CD4-positive, alpha-beta memory T cell (primary cell): ENCODE measurements at regions of chr1 and their contacts with region 1.

Region 1: GRCh38 chr1:119675349-119676345 is 27.6 kb upstream of the ZNF697 start:
- DNase-seq: peak; percentile 31 to 42 (median 36)
- H3K4me3 ChIP-seq: peak overlapping the region in 1 of 2 donors; percentile 12
- H3K4me3 Mint-ChIP-seq: peak overlapping the region in 7 of 8 donors; percentile 13 to 77 (median 61)
- H3K27ac ChIP-seq: no peak overlapping the region
- H3K27ac Mint-ChIP-seq: no peak overlapping the region
- H3K4me1 ChIP-seq: peaks cover 8% of the 10 kb centered on the region
- H3K4me1 Mint-ChIP-seq: peaks cover 0 to 6% (median 5%) of the 10 kb centered on the region in 4 donors
- H3K27me3 ChIP-seq: peaks cover 5% of the 10 kb centered on the region
- H3K27me3 Mint-ChIP-seq: peaks cover 11 to 14% of the 10 kb centered on the region in 2 donors

Region 2: GRCh38 chr1:119275145-119276134 is 400.2 kb before region 1 on chr1:
- CTCF ChIA-PET with region 1: interaction called, 16 read pairs
- POLR2A ChIA-PET with region 1: no interaction called
- intact Hi-C with region 1: loop called (anchors 1 kb)
- DNase-seq: peak in 4 of 5 donors; percentile 19 to 28 (median 26)
- H3K4me3 ChIP-seq: no peak overlapping the region
- H3K4me3 Mint-ChIP-seq: no peak overlapping the region
- H3K27ac ChIP-seq: no peak overlapping the region
- H3K27ac Mint-ChIP-seq: peak overlapping the region in 1 of 7 donors; percentile 54
- H3K4me1 ChIP-seq: no peaks in the 10 kb centered on the region
- H3K4me1 Mint-ChIP-seq: no peaks in the 10 kb centered on the region
- H3K27me3 ChIP-seq: no peaks in the 10 kb centered on the region
- H3K27me3 Mint-ChIP-seq: peaks cover 4 to 5% of the 10 kb centered on the region in 2 donors

Region 3: GRCh38 chr1:119613769-119614720 is 61.6 kb before region 1 on chr1:
- CTCF ChIA-PET with region 1: interaction called, 4 read pairs
- POLR2A ChIA-PET with region 1: no interaction called
- intact Hi-C with region 1: loop called (anchors 2 kb)
- DNase-seq: peak in 4 of 5 donors; percentile 16 to 22 (median 20)
- H3K4me3 ChIP-seq: no peak overlapping the region
- H3K4me3 Mint-ChIP-seq: no peak overlapping the region
- H3K27ac ChIP-seq: no peak overlapping the region
- H3K27ac Mint-ChIP-seq: no peak overlapping the region
- H3K4me1 ChIP-seq: no peaks in the 10 kb centered on the region
- H3K4me1 Mint-ChIP-seq: no peaks in the 10 kb centered on the region
- H3K27me3 ChIP-seq: no peaks in the 10 kb centered on the region
- H3K27me3 Mint-ChIP-seq: peaks cover 1 to 8% of the 10 kb centered on the region in 2 donors

Region 4: DNA sequence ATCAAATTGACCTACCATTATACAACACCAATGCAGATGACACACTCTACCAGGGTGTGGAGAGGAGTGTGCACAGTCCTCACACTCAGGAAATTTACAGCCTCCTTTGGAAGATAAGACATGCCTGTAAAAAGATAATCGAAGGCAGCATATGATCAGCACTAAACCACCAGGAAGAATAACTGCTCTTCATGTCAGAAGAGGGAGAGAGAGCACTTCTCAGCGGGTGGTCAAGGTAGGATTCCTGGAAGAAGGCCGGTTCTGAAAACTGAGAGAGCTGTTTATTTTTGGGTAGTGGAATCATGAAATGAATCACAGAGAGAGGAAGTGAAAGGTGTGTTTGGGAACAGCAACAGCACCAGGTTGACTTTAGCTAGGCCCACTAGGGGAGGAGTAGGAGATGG is 13.6 kb before region 1 on chr1:
- CTCF ChIA-PET with region 1: interaction called, 10 read pairs
- POLR2A ChIA-PET with region 1: no interaction called
- intact Hi-C with region 1: no loop called
- DNase-seq: no peak
- H3K4me3 ChIP-seq: no peak overlapping the region
- H3K4me3 Mint-ChIP-seq: no peak overlapping the region
- H3K27ac ChIP-seq: no peak overlapping the region
- H3K27ac Mint-ChIP-seq: no peak overlapping the region
- H3K4me1 ChIP-seq: no peaks in the 10 kb centered on the region
- H3K4me1 Mint-ChIP-seq: no peaks in the 10 kb centered on the region
- H3K27me3 ChIP-seq: no peaks in the 10 kb centered on the region
- H3K27me3 Mint-ChIP-seq: peaks cover 11% of the 10 kb centered on the region in 2 donors